ENCODE measurements at regions of chr5 and their contacts with region 1.

Region 1: GRCh38 chr5:145825751-145826180 is 9.4 kb downstream of the PRELID2 start:
- DNase-seq: no peak
- H3K4me3 ChIP-seq: no peak overlapping the region
- H3K27ac ChIP-seq: no peak overlapping the region
- H3K4me1 ChIP-seq: peaks cover 0 to 24% (median 1%) of the 10 kb centered on the region in 3 donors
- H3K27me3 ChIP-seq: no peaks in the 10 kb centered on the region
- CTCF ChIP-seq: peak; percentile 44 to 80 (median 66)
- POLR2A ChIP-seq: no peak

Region 2: GRCh38 chr5:145668714-145669113 is 157.1 kb before region 1 on chr5:
- intact Hi-C with region 1: no loop called
- DNase-seq: no peak
- H3K4me3 ChIP-seq: no peak overlapping the region
- H3K27ac ChIP-seq: peak overlapping the region in 1 of 4 donors; percentile 63
- H3K4me1 ChIP-seq: peaks cover 0 to 28% (median 8%) of the 10 kb centered on the region in 3 donors
- H3K27me3 ChIP-seq: no peaks in the 10 kb centered on the region
- CTCF ChIP-seq: no peak
- POLR2A ChIP-seq: no peak

Region 3: DNA sequence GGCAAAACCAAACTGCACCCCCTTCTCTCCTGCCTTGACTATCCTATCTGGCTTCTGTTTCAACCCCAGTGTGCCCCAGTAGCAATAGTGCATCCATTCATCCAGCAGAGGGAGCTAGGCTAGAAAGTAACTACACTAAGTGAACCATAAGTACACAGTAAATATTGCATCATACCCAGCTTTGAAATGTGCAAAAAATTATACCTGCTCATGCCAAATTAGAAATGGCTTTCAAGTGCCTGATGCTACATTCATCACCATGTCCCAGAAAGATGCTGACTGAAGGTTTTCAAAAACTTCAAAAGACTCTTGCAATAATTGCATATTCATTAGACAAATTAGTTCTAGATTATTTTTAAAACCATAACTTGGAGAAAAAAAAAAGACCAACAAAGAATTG is 144.1 kb before region 1 on chr5:
- intact Hi-C with region 1: loop called (anchors 10 kb)
- DNase-seq: no peak
- H3K4me3 ChIP-seq: no peak overlapping the region
- H3K27ac ChIP-seq: no peak overlapping the region
- H3K4me1 ChIP-seq: peaks cover 0 to 10% (median 0%) of the 10 kb centered on the region in 3 donors
- H3K27me3 ChIP-seq: no peaks in the 10 kb centered on the region
- CTCF ChIP-seq: peak; percentile 23 to 87 (median 78)
- POLR2A ChIP-seq: no peak

Measured in esophagus squamous epithelium (tissue), 5 donors.